Caco-2 (cell line): ENCODE measurements at regions of chr4 and their contacts with region 1.

Region 1: GRCh38 chr4:98658287-98659105 is at the start of gene TSPAN5:
- DNase-seq: peak; percentile 73 to 87
- H3K4me3 ChIP-seq: peak within 1 kb of the TSS; percentile 80
- H3K4me3 Mint-ChIP-seq: peak within 1 kb of the TSS; percentile 86
- H3K27ac Mint-ChIP-seq: peak within 1 kb of the TSS; percentile 60
- H3K4me1 ChIP-seq: peaks cover 44% of the 10 kb centered on the region
- H3K4me1 Mint-ChIP-seq: peaks cover 56% of the 10 kb centered on the region
- H3K27me3 ChIP-seq: no peaks in the 10 kb centered on the region
- H3K27me3 Mint-ChIP-seq: no peaks in the 10 kb centered on the region
- CTCF ChIP-seq: no peak
- total RNA-seq, gene TSPAN5: 24.1 and 26.1 TPM in 2 replicates

Region 2: DNA sequence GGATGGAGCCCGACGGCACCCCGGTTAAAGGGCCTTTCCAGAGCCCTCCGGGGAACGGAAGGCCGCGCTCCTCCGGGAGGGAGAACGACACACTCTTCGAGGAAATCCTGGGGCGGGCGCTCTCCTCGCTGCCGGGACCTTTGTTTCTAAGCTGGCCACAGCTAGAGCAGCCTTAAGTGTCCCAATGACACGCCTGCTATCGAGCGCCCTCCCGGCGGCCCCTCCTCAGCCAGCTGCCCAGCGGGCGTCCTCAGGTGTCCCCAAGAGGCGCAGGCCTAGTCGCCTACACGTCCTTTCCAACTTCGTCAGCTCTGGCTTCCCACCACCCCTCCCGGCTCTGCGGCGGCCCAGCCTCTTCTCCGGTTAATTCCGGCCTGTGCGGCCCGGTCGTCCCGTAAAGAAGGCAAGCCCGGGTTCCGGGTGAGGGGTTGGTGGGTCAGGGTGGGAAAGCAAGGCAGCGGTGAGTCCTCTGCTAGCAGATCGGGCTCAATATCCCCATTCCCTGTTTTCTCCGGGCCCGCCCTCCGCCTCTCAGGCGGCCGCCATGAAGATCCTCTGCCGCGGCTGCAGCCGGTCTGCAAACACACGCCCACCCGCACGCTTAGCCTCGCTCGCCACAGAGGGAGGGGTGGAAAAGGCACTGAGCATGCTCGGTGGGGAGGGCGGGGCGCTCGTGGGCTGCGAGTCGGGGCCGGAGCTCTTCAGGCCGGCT is 397.8 kb before region 1 on chr4:
- CTCF ChIA-PET with region 1: no interaction called
- POLR2A ChIA-PET with region 1: no interaction called
- intact Hi-C with region 1: loop called (anchors 5 kb)
- DNase-seq: peak; percentile 96 to 97
- H3K4me3 ChIP-seq: peak overlapping the region; percentile 50
- H3K4me3 Mint-ChIP-seq: peak overlapping the region; percentile 89
- H3K27ac Mint-ChIP-seq: peak overlapping the region; percentile 96
- H3K4me1 ChIP-seq: peaks cover 10% of the 10 kb centered on the region
- H3K4me1 Mint-ChIP-seq: peaks cover 20% of the 10 kb centered on the region
- H3K27me3 ChIP-seq: no peaks in the 10 kb centered on the region
- H3K27me3 Mint-ChIP-seq: no peaks in the 10 kb centered on the region
- CTCF ChIP-seq: peak in 1 of 2 experiments; percentile 0

Region 3: DNA sequence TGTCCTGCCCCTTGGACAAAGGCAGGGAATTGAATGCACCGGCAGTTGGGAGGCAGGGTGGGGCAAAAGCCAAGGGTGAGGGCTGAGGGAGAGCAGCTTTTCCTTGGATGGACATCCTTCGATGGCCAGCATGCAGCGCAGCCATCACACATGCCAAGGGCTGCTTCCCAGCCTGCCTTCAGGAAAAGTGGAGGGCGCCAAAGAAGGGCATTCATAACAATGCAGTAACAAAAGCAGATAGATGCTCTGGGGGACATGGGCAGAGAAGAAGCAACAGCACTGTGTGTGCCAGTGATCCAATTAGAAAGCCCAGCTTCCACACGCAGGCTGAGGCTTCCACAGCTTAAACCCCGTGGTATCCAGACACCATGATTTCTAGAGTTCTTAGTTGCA is 71.5 kb before region 1 on chr4:
- CTCF ChIA-PET with region 1: no interaction called
- POLR2A ChIA-PET with region 1: no interaction called
- intact Hi-C with region 1: loop called (anchors 5 kb)
- DNase-seq: no peak
- H3K4me3 ChIP-seq: no peak overlapping the region
- H3K4me3 Mint-ChIP-seq: no peak overlapping the region
- H3K27ac Mint-ChIP-seq: no peak overlapping the region
- H3K4me1 ChIP-seq: peaks cover 10% of the 10 kb centered on the region
- H3K4me1 Mint-ChIP-seq: peaks cover 25% of the 10 kb centered on the region
- H3K27me3 ChIP-seq: no peaks in the 10 kb centered on the region
- H3K27me3 Mint-ChIP-seq: no peaks in the 10 kb centered on the region
- CTCF ChIP-seq: no peak

Region 4: DNA sequence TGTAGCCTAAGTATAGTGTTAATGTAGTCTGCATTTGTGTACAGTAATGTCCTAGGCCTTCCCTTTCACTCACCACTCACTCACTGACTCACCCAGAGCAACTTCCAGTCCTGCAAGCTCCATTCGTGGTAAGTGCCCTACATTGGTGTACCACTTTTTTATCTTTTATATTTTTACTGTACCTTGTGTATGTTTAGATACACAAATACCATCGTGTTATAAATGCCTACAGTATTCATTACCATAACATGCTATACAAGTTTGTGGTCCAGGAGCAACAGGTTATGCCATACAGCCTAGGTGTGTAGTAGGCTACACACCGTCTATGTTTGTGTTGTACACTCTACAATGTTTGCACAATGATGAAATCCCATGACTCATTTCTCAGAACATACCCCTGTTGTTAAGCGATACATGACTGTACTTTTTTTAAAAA is 15.5 kb before region 1 on chr4:
- CTCF ChIA-PET with region 1: interaction called, 3 read pairs
- POLR2A ChIA-PET with region 1: no interaction called
- intact Hi-C with region 1: loop called (anchors 2 kb)
- DNase-seq: peak in 1 of 2 experiments; percentile 50
- H3K4me3 ChIP-seq: no peak overlapping the region
- H3K4me3 Mint-ChIP-seq: no peak overlapping the region
- H3K27ac Mint-ChIP-seq: no peak overlapping the region
- H3K4me1 ChIP-seq: peaks cover 18% of the 10 kb centered on the region
- H3K4me1 Mint-ChIP-seq: peaks cover 7% of the 10 kb centered on the region
- H3K27me3 ChIP-seq: no peaks in the 10 kb centered on the region
- H3K27me3 Mint-ChIP-seq: no peaks in the 10 kb centered on the region
- CTCF ChIP-seq: no peak

Region 5: DNA sequence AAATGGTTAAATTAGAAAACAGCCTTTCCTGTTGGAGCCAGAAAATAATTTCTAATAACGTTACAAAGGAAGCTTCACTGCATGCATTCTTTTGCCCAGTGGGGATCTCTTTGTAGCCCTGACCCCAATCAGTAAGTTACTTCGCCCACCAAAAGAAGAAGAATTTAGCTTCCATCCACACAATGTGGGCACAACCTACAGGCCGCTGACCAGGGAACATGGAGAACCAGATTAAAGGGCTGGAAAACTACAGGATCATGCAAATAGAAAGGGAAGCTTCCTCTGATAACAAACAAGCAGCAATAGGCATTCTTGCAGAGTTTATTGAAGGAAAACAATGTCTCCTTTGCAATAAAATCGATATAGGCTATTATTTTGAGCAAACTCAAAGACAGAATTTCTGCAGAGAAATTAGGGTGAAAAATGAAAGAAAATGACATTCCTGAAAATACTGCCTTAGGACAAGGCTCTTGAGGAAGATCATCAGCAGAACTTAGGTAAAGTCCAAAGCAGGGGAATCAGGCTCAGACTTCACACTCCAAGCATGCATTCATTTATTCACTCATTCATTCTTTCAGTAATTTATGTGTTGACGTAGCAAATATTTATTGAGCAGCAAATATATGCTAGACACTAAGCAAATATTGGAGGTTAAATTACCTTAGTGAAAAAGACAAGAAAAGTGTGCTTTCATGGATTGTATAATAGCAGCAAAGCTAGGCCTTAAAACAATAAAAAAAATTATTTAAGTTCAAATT is 21.4 kb after region 1 on chr4:
- CTCF ChIA-PET with region 1: no interaction called
- POLR2A ChIA-PET with region 1: no interaction called
- intact Hi-C with region 1: loop called (anchors 2 kb)
- DNase-seq: no peak
- H3K4me3 ChIP-seq: no peak overlapping the region
- H3K4me3 Mint-ChIP-seq: no peak overlapping the region
- H3K27ac Mint-ChIP-seq: no peak overlapping the region
- H3K4me1 ChIP-seq: peaks cover 48% of the 10 kb centered on the region
- H3K4me1 Mint-ChIP-seq: peaks cover 29% of the 10 kb centered on the region
- H3K27me3 ChIP-seq: no peaks in the 10 kb centered on the region
- H3K27me3 Mint-ChIP-seq: no peaks in the 10 kb centered on the region
- CTCF ChIP-seq: no peak

Region 6: GRCh38 chr4:98706200-98706813 is 47.8 kb after region 1 on chr4:
- CTCF ChIA-PET with region 1: no interaction called
- POLR2A ChIA-PET with region 1: no interaction called
- intact Hi-C with region 1: no loop called
- DNase-seq: no peak
- H3K4me3 ChIP-seq: no peak overlapping the region
- H3K4me3 Mint-ChIP-seq: no peak overlapping the region
- H3K27ac Mint-ChIP-seq: no peak overlapping the region
- H3K4me1 ChIP-seq: peaks cover 12% of the 10 kb centered on the region
- H3K4me1 Mint-ChIP-seq: peaks cover 6% of the 10 kb centered on the region
- H3K27me3 ChIP-seq: no peaks in the 10 kb centered on the region
- H3K27me3 Mint-ChIP-seq: no peaks in the 10 kb centered on the region
- CTCF ChIP-seq: no peak

Region 7: DNA sequence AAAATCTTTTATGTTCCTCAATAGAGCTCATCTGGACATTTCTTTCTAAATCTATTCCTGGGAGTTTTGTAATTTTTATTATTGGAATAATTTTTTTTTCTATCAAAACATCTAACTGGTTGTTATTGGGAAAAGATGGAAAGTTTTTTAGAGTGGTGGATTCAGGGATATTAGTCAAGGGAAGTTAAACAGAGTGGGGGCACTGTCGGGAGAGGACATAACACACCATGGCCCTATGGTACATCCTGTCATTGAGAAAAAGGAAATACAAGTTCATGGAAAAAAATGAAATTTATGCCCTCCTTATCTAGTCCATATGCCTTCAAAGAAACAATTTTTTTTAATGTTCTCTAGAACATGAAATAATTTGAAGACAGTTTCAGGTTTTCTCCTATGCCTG is 96.2 kb after region 1 on chr4:
- CTCF ChIA-PET with region 1: no interaction called
- POLR2A ChIA-PET with region 1: no interaction called
- intact Hi-C with region 1: no loop called
- DNase-seq: no peak
- H3K4me3 ChIP-seq: no peak overlapping the region
- H3K4me3 Mint-ChIP-seq: no peak overlapping the region
- H3K27ac Mint-ChIP-seq: no peak overlapping the region
- H3K4me1 ChIP-seq: peaks cover under 1% of the 10 kb centered on the region; the same call in 1 of the 2 replicates
- H3K4me1 Mint-ChIP-seq: no peaks in the 10 kb centered on the region
- H3K27me3 ChIP-seq: no peaks in the 10 kb centered on the region
- H3K27me3 Mint-ChIP-seq: no peaks in the 10 kb centered on the region
- CTCF ChIP-seq: no peak

Region 8: GRCh38 chr4:98816815-98817214 is 158.3 kb after region 1 on chr4:
- CTCF ChIA-PET with region 1: no interaction called
- POLR2A ChIA-PET with region 1: no interaction called
- intact Hi-C with region 1: loop called (anchors 5 kb)
- DNase-seq: peak; percentile 81 to 84
- H3K4me3 ChIP-seq: no peak overlapping the region
- H3K4me3 Mint-ChIP-seq: no peak overlapping the region
- H3K27ac Mint-ChIP-seq: peak overlapping the region; percentile 94
- H3K4me1 ChIP-seq: peaks cover 42% of the 10 kb centered on the region
- H3K4me1 Mint-ChIP-seq: peaks cover 39% of the 10 kb centered on the region
- H3K27me3 ChIP-seq: no peaks in the 10 kb centered on the region
- H3K27me3 Mint-ChIP-seq: no peaks in the 10 kb centered on the region
- CTCF ChIP-seq: no peak

Region 9: GRCh38 chr4:98928505-98929340 is 270.2 kb after region 1 on chr4 and contains the start of gene EIF4E:
- CTCF ChIA-PET with region 1: no interaction called
- POLR2A ChIA-PET with region 1: no interaction called
- intact Hi-C with region 1: loop called (anchors 2 kb)
- DNase-seq: peak; percentile 97 to 99
- H3K4me3 ChIP-seq: peak within 1 kb of the TSS; percentile 95
- H3K4me3 Mint-ChIP-seq: peak within 1 kb of the TSS; percentile 81
- H3K27ac Mint-ChIP-seq: peak within 1 kb of the TSS; percentile 85
- H3K4me1 ChIP-seq: peaks cover 6% of the 10 kb centered on the region
- H3K4me1 Mint-ChIP-seq: peaks cover 7% of the 10 kb centered on the region
- H3K27me3 ChIP-seq: no peaks in the 10 kb centered on the region
- H3K27me3 Mint-ChIP-seq: no peaks in the 10 kb centered on the region
- CTCF ChIP-seq: peak in 1 of 2 experiments; percentile 10
- total RNA-seq, gene EIF4E: 140 and 151 TPM in 2 replicates